ENCODE measurements at regions of chr2 and their contacts with region 1.

Region 1: GRCh38 chr2:20179755-20180594 is 45.0 kb downstream of the SDC1 start:
- H3K4me3 ChIP-seq: no peak overlapping the region
- H3K27ac ChIP-seq: no peak overlapping the region
- H3K4me1 ChIP-seq: no peaks in the 10 kb centered on the region
- CTCF ChIP-seq: no peak

Region 2: DNA sequence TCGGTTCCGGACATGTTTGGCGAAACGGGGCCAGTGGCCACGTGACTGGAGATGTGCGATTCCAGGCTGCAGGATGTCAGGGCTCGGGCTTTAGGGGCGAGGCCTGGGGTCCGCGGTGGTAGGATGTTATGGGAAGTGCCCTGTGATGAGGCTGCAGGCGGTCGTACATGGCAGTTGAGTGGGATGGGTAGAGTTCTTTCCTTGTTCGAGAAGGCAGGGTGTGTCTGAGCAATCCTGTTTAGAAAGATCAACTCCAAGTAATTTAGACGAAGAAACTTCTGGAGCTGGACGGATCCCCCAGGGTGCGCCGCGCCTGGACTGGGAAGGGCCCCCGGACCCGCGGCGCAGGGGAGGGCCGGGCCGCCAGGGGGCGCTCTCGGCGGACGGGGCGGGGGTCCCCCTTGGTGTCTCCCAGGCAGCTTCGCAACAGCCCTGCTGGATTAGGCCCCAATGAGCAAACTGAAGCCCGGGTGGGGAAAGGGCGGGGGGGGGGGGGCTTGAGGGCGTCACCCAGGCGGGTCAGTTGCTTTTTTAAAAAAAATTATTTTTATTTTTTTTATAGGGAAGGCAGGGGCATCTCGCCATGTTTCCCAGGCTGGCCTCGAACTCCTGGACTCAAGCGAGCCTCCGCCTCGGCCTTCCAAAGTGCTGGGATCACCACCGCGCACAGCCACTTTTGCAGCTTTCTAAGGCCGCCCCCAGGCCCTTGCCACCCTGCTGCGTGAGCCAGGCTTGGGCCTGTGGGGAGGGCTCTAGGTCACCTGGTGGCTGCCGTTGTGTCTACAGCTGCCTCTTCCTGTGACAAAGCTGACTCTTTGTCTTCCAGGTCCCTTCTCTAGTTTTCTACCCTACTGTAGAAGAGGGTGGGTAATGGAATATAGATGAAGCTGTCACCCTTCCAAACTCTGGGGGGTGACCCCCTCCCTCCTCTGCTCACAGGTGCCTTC is 62.4 kb after region 1 on chr2:
- CTCF ChIA-PET with region 1: no interaction called
- POLR2A ChIA-PET with region 1: no interaction called
- H3K4me3 ChIP-seq: no peak overlapping the region
- H3K27ac ChIP-seq: no peak overlapping the region
- H3K4me1 ChIP-seq: no peaks in the 10 kb centered on the region
- CTCF ChIP-seq: no peak

Region 3: DNA sequence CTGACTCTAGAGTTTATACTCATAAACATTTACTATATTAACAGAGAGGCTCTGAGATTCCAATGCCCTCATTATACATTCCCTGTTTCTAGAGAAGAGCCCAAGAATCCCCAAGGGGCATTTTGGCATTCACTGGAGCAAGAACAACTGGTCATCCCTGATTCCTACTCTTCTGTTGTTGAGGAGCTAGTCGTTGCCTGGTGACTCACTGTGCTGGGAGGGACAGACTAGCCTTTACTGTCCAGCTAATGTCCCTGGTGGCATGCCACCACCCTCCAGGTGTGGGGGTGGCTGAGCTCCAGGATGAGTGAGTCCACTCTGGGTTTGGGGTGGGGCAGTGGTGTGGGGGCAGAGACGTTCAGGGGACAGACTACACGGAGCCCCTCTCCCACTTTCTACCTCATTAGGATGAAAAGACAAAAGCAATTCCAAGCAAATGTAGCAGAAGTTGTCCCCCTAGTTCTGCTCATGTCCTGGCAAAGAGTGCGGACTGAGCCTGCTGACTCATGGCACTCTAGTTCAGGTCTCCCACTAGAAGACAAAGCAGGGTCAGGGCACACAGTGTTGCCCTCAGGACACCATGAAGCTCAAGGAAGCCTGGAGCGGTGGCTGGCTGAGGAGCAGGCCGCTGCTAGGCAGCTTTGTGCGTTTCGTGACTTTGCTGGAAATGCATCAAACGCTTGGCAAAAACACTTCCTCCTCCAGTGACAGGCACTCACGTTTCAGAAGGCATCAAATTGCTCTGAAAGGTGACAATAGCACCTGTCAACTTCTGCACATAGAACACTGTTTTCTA is 316.3 kb after region 1 on chr2:
- CTCF ChIA-PET with region 1: no interaction called
- POLR2A ChIA-PET with region 1: interaction called, 10 read pairs
- H3K4me3 ChIP-seq: no peak overlapping the region
- H3K27ac ChIP-seq: no peak overlapping the region
- H3K4me1 ChIP-seq: no peaks in the 10 kb centered on the region
- CTCF ChIP-seq: no peak